ENCODE measurements at regions of chr1 and their contacts with region 1.

Region 1: DNA sequence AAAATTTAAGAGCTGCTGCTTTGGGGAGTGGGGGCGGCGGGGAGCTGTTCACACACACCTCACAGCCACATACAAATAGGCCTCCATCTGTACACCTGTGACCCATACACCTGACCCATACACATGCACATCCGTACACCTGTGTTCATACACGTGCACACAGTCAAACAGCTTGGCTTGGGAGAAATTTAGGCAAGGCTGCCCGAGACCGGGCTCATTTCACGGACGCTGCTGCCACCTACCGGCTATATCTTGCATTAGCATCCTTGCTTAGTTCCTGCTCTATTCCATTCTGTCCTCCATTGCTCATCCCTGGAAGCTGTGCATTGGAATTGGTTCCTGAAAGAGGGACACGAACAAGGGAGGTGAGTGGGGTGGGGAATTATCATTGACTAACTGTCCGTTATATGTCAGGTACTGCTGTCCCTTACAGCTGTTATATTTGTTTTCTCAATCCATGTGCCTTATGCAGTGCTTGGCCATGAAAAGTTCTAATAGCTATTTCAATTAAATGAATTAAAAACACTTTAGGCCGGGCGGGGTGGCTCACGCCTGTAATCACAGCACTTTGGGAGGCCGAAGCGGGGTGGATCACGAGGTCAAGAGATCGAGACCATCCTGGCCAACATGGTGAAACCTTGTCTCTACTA is 37.1 kb upstream of the EPB41 start:
- DNase-seq: peak; percentile 83
- H3K4me3 ChIP-seq: no peak overlapping the region
- H3K27ac ChIP-seq: no peak overlapping the region
- H3K4me1 ChIP-seq: peaks cover 5% of the 10 kb centered on the region
- H3K27me3 ChIP-seq: no peaks in the 10 kb centered on the region
- CTCF ChIP-seq: peak; percentile 90

Region 2: DNA sequence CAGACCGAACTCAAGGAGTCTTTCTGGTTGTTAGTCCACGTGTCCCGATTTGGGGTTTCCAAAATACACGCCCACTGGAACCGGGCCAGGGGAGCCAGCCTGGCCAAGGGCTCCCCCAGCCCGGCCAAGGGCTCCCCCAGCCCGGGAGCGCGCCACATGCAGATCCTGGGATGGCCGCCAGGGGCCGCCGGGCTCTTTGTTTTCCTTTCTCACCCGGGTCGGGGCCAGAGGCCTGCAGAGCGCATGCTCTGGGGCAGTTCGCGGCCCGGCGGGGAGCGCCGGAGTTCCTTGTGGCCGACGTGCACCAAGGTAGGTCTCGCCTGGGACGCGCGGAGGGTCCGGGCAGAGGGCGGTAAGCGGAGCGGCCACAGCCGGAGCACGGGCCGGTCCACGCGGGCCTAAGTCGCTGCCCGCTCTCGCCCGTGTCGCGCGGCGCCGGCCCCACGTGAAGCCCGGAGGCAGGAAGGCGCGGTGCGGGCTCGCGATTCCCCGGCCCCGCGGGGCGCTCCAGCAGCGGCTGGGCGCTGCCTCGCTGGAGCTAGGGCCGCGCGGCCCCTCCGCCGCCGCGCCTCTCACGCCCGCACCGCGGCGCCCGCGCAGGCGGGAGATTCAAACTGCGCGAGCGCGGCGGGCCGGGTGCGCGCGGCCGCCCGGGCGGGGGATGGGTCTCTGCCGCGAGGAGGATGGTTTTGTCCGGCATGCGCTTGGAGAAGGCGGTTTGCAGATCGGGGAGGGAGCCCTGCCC is 359.1 kb before region 1 on chr1:
- intact Hi-C with region 1: loop called (anchors 5 kb)
- DNase-seq: peak; percentile 95
- H3K4me3 ChIP-seq: peak overlapping the region; percentile 59
- H3K27ac ChIP-seq: peak overlapping the region; percentile 81
- H3K4me1 ChIP-seq: peaks cover 7% of the 10 kb centered on the region
- H3K27me3 ChIP-seq: no peaks in the 10 kb centered on the region
- CTCF ChIP-seq: peak; percentile 99

Region 3: DNA sequence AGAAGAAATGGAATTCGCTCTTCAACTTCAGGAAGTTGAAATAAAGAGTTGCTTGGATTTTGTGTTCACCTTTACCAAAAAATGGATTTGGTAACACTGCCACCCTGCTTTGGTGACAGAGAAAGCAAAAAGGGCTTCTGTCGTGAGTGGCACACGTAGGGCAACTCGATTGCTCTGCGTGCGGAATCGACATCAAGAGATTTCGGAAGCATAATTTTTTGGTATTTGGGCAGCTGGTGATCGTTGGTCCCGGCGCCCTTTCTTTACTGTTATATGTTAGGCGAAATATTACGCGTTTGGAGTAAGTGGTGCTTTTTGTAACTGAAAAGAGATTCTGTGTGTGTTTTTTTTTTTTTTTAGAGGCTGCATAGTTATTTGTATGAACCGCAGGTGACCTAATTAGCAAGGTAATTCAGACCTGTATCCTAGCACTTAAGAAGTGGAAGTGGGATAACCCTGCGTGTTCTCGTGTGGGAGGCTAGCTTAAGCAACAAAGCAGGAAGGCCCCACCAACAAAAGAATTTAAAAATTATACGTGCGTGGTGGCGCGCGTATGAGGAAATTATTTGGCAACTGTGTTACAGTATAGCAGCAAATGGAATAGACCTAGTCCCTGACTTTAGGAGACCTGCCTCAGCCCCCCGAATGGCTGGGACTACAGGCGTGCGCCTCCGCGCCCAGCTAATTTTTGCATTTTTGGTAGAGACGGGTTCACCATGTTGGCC is 228.6 kb before region 1 on chr1 and contains the start of gene RNU11:
- intact Hi-C with region 1: loop called (anchors 5 kb)
- DNase-seq: peak; percentile 93
- H3K4me3 ChIP-seq: peak within 1 kb of the TSS; percentile 27
- H3K27ac ChIP-seq: peak within 1 kb of the TSS; percentile 90
- H3K4me1 ChIP-seq: peaks cover 11% of the 10 kb centered on the region
- H3K27me3 ChIP-seq: no peaks in the 10 kb centered on the region
- CTCF ChIP-seq: no peak
- total RNA-seq, gene RNU11: not detected

Region 4: DNA sequence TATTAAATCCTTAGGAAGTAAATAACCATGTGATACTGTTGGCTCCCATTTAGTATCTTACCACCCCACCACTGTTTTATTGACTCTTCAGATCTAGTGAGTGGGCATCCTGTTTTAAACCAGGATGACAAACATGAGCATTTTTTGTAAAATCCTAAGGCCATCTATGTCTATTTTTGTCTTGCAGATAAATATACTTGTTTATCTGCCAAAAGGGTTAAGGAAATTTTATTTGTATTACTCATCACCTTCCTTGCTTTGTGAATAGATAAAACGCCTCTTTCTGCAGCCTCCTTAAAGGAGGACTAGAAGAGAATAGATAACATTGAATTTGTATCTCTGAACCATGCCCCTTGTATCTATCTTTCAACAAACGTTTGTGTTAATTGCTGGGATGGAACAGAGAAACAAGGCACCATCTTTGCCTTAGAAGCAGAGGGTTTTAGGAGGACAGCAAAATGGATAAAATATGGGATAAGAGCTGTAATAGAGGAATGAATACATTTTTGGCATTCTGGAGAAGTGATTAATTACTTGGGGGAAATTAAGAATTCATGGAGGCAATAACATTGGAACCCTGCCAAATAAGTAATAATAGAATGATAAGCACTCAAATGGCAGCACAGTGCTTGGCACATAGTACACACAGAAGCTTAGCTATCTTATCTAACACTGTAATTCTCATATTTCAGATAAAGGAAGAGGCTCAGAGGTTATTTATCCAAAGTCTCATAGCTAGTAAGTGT is 125.8 kb before region 1 on chr1:
- intact Hi-C with region 1: no loop called
- DNase-seq: no peak
- H3K4me3 ChIP-seq: no peak overlapping the region
- H3K27ac ChIP-seq: no peak overlapping the region
- H3K4me1 ChIP-seq: peaks cover 17% of the 10 kb centered on the region
- H3K27me3 ChIP-seq: no peaks in the 10 kb centered on the region
- CTCF ChIP-seq: no peak

Region 5: GRCh38 chr1:28779751-28780408 is 97.4 kb before region 1 on chr1:
- intact Hi-C with region 1: loop called (anchors 1 kb)
- DNase-seq: no peak
- H3K4me3 ChIP-seq: no peak overlapping the region
- H3K27ac ChIP-seq: no peak overlapping the region
- H3K4me1 ChIP-seq: no peaks in the 10 kb centered on the region
- H3K27me3 ChIP-seq: no peaks in the 10 kb centered on the region
- CTCF ChIP-seq: no peak

Region 6: DNA sequence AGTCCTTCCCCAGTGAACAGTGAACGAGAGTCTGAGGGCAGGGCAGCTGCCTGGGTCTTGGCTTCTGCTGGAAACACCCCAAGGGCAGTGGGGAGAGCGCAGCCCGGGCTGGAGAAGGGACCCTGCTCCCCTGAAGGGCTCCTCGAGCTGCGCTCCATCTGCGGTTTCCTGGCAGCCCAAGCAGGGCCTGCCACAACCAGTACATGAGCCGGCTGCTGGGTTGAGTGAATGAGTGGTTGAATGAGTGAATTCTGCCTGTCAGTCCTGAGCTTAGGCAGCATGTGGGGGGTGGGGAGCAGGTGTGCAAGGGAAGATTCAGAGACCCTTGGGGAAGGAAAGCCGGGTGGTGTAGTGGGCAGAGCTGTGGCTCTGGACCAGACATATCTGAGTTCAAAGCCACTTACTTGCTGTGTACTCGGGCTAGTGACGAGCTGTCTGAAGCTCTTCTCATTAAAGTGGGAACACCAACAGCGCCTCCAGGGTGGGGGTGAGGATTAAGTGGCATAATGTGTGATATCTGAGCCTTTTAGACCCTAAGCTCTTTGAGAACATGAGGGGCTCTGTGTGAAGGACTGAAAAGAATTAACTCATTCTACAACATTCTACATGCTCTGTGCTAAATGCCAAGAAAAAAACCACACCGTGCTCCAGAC is 61.6 kb before region 1 on chr1:
- intact Hi-C with region 1: no loop called
- DNase-seq: no peak
- H3K4me3 ChIP-seq: no peak overlapping the region
- H3K27ac ChIP-seq: no peak overlapping the region
- H3K4me1 ChIP-seq: no peaks in the 10 kb centered on the region
- H3K27me3 ChIP-seq: peaks cover 46% of the 10 kb centered on the region
- CTCF ChIP-seq: no peak

Region 7: DNA sequence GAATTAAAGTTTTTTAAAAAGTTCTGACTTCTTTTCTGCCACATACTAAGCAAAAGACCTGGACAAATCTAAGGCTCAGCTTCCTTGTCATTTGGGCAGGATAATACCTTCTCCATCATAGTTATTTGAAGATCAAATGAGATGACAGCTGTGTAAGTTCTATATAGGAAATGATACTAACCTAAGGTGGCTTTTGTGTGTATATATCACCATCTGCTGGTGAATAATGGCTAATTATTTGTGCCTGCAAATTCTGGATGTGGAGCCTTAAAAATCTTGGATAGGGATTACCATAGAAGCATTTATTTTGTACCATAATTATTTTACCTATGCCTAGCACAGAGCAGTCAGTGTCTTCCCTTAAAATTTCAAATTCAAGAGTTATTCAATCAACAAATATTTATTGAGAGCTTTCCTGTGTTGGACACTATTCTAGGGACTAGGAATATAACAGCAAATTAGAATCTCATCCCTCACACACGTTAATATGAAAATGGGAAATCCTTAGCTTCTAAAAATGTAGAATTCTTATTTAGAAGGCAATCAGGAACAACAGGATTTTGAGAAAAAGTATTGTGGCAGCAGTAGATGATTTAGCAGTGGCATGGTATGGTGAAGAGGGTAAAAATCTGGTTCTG is 156.7 kb after region 1 on chr1:
- intact Hi-C with region 1: loop called (anchors 1 kb)
- DNase-seq: no peak
- H3K4me3 ChIP-seq: no peak overlapping the region
- H3K27ac ChIP-seq: no peak overlapping the region
- H3K4me1 ChIP-seq: no peaks in the 10 kb centered on the region
- H3K27me3 ChIP-seq: no peaks in the 10 kb centered on the region
- CTCF ChIP-seq: peak; percentile 71

Region 8: GRCh38 chr1:29124366-29125236 is 247.3 kb after region 1 on chr1:
- intact Hi-C with region 1: loop called (anchors 5 kb)
- DNase-seq: peak; percentile 63
- H3K4me3 ChIP-seq: peak overlapping the region; percentile 51
- H3K27ac ChIP-seq: peak overlapping the region; percentile 80
- H3K4me1 ChIP-seq: peaks cover 11% of the 10 kb centered on the region
- H3K27me3 ChIP-seq: peaks cover 45% of the 10 kb centered on the region
- CTCF ChIP-seq: peak; percentile 42

Region 9: GRCh38 chr1:29202584-29203340 is 325.5 kb after region 1 on chr1:
- intact Hi-C with region 1: loop called (anchors 2 kb)
- DNase-seq: peak; percentile 99
- H3K4me3 ChIP-seq: no peak overlapping the region
- H3K27ac ChIP-seq: peak overlapping the region; percentile 44
- H3K4me1 ChIP-seq: no peaks in the 10 kb centered on the region
- H3K27me3 ChIP-seq: no peaks in the 10 kb centered on the region
- CTCF ChIP-seq: peak; percentile 96

Measured in colonic mucosa (tissue), 4 donors.